Activated CD4-positive, alpha-beta T cell treated with anti-CD3 and anti-CD28 coated beads for 36 hours (primary cell): ENCODE measurements at regions of chr19 and their contacts with region 1.

Region 1: GRCh38 chr19:31548941-31549340 is 199.7 kb upstream of the TSHZ3 start:
- DNase-seq: peak; percentile 15
- ATAC-seq: no peak
- H3K4me3 Mint-ChIP-seq: no peak overlapping the region
- H3K27ac Mint-ChIP-seq: no peak overlapping the region
- H3K4me1 Mint-ChIP-seq: no peaks in the 10 kb centered on the region
- H3K27me3 Mint-ChIP-seq: peaks cover 7% of the 10 kb centered on the region

Region 2: GRCh38 chr19:30669329-30670010 is 879.5 kb before region 1 on chr19:
- CTCF ChIA-PET with region 1: no interaction called
- POLR2A ChIA-PET with region 1: no interaction called
- intact Hi-C with region 1: loop called in 1 of 2 experiments (anchors 10 kb)
- DNase-seq: peak; percentile 72
- ATAC-seq: no peak
- H3K4me3 Mint-ChIP-seq: no peak overlapping the region
- H3K27ac Mint-ChIP-seq: no peak overlapping the region
- H3K4me1 Mint-ChIP-seq: no peaks in the 10 kb centered on the region
- H3K27me3 Mint-ChIP-seq: peaks cover 16% of the 10 kb centered on the region

Region 3: GRCh38 chr19:31515931-31516330 is 33.0 kb before region 1 on chr19:
- CTCF ChIA-PET with region 1: no interaction called
- POLR2A ChIA-PET with region 1: no interaction called
- intact Hi-C with region 1: no loop called
- DNase-seq: no peak
- ATAC-seq: no peak
- H3K4me3 Mint-ChIP-seq: no peak overlapping the region
- H3K27ac Mint-ChIP-seq: no peak overlapping the region
- H3K4me1 Mint-ChIP-seq: no peaks in the 10 kb centered on the region
- H3K27me3 Mint-ChIP-seq: peaks cover 1% of the 10 kb centered on the region

Region 4: DNA sequence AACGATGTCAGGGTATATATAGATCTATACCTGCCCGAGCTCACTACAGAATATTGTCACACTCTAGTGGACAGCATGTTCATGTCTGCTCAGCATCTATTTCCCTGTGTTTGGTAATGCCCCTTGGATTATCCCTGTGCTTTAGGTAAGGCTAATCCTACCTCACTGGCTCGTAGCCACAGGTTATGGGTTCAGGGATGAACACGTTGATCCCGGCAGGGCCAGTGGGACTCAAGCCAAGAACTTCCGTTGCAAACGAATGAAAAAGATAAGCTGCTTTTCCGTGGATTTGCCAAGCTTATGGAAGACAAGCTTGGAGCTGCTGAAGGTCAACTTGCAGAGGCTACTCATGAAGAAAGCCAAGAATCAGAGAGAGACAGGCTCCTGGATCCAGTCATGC is 200.3 kb after region 1 on chr19:
- CTCF ChIA-PET with region 1: no interaction called
- POLR2A ChIA-PET with region 1: no interaction called
- intact Hi-C with region 1: no loop called
- DNase-seq: no peak
- ATAC-seq: no peak
- H3K4me3 Mint-ChIP-seq: no peak overlapping the region
- H3K27ac Mint-ChIP-seq: no peak overlapping the region
- H3K4me1 Mint-ChIP-seq: no peaks in the 10 kb centered on the region
- H3K27me3 Mint-ChIP-seq: no peaks in the 10 kb centered on the region